ENCODE measurements at regions of chr9 and their contacts with region 1.

Region 1: DNA sequence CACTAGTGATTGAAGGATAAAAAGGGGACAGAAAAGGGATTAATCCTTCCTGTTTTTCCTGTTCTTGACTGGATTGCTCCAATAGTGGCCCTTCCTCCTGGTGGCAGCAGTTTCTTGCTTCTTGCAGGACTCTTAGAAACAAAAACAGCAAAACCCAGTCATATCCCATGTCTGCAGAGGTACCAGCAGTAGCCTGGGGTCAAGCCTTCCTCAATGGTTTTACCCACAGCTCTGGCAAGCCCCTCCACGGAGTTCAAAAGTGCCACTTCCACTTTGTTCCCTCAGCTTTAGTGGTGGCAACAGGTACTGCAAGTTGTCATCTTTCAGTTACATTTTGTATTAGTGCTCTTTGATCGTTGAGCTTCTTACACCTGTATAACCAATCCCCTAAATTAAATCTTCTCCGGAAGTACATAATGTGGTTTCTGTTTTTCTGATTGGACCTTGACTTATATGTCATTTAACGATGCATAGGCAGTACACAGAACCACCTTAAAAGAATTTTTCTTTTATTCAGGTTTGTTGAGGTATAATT is 8.7 kb upstream of the RANBP6 start:
- DNase-seq: peak; percentile 57
- ATAC-seq: peak; percentile 82
- H3K4me3 Mint-ChIP-seq: peak overlapping the region; percentile 26
- H3K27ac Mint-ChIP-seq: no peak overlapping the region
- H3K4me1 Mint-ChIP-seq: peaks cover 8% of the 10 kb centered on the region
- H3K27me3 Mint-ChIP-seq: peaks cover 4% of the 10 kb centered on the region

Region 2: DNA sequence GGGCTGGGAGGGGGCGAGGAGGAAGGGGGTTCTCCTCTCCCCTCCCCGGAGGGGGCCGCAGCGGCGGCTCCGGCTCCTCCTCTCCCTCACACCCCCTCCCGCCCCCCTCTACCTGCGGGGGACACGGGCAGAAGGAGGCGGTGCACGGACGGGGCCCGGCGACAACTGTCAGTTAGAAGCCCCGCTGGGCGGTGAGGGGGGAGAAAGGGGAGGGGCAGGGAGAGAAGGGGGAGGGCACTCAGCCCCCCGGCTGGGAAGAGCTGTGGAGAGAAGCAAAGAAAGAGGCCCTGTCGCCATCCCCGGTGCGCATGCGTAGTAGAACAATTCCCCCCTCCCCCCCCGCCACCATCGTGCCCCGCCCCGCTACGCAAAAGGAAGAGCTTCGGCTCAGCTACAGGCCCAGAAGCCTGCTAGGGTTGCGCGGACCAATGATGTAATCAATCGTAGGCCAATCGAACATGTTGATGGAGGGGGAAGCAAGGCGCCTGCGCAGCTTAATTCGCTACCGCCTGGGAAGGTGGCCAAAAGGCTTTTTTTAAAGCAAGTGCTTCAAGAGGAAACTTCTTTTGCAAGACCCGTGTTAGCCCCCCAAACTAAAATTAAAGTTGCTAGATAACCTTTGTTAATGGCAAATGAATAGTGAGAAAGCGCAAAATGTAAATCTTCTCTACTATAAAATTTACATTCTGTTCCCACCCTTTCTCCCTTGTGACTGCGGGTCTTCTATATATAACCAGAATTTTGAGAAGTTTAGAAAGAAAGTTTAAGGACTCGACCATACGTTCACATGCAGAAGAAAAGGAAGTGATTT is 15.7 kb before region 1 on chr9:
- CTCF ChIA-PET with region 1: interaction called, 22 read pairs
- POLR2A ChIA-PET with region 1: interaction called, 5 read pairs
- DNase-seq: peak; percentile 98
- ATAC-seq: peak; percentile 81
- H3K4me3 Mint-ChIP-seq: peak overlapping the region; percentile 72
- H3K27ac Mint-ChIP-seq: peak overlapping the region; percentile 83
- H3K4me1 Mint-ChIP-seq: peaks cover 63% of the 10 kb centered on the region
- H3K27me3 Mint-ChIP-seq: no peaks in the 10 kb centered on the region

Region 3: DNA sequence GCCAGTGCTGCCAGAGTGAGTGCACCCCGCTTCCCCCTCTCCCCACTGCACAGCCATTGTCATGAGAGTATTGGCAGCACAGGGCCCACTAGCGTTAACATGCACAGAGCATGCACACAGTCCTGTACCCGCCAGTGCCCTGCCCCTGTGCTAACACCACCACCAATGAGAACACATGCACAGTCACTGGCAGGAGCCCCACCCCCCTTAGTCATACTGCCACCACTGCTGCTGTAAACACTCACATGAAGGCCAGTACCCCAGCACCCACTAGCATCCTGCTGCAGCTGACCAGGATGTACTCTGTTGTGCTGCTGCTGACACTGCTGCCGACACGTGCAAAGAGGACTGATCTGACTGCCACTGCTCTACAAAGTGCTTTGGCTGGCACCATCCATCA is 10.9 kb after region 1 on chr9:
- CTCF ChIA-PET with region 1: interaction called, 17 read pairs
- POLR2A ChIA-PET with region 1: no interaction called
- DNase-seq: no peak
- ATAC-seq: no peak
- H3K4me3 Mint-ChIP-seq: no peak overlapping the region
- H3K27ac Mint-ChIP-seq: no peak overlapping the region
- H3K4me1 Mint-ChIP-seq: no peaks in the 10 kb centered on the region
- H3K27me3 Mint-ChIP-seq: peaks cover 35% of the 10 kb centered on the region

Region 4: GRCh38 chr9:6049798-6050197 is 25.7 kb after region 1 on chr9:
- CTCF ChIA-PET with region 1: interaction called, 22 read pairs
- POLR2A ChIA-PET with region 1: no interaction called
- DNase-seq: peak; percentile 67
- ATAC-seq: peak; percentile 75
- H3K4me3 Mint-ChIP-seq: no peak overlapping the region
- H3K27ac Mint-ChIP-seq: no peak overlapping the region
- H3K4me1 Mint-ChIP-seq: peaks cover 9% of the 10 kb centered on the region
- H3K27me3 Mint-ChIP-seq: peaks cover 8% of the 10 kb centered on the region